ENCODE measurements at regions of chr22 and their contacts with region 1.

Region 1: DNA sequence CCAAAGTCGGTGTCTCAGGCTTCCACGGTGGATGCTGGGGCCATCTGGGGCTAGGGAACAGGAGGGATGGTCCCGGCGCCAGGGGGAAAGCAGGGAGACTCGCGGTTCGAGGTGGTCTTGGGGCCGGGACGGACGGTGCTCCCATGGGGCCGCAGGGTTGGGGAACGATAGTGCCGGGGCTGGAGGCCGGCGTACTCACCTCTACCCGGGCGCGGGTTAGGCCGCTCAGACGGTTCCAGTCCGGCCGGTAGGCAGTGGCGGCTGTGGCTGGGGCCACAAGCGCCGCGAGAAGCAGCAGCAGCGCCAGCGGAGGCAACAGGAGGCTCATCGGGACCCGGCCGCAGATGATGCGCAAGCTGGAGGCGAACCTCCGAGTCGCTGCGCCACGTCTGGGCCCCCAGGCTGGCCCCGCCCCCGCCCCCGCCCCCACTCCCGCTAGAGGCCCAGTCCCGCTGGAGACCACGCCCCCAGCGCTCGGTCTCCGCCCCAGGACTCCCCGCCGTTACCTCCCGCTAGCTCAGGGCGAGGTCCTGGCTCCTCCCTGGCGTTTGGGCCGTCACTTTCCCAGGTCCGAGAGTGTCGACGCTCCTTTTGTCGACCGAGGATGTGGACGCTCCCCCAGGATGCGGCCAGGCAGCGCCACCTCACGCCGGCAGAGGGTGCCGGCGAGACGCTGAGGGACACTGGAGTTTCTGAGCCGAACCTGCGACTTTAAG is at the start of gene SELENOM:
- DNase-seq: peak; percentile 99
- H3K4me3 Mint-ChIP-seq: peak within 1 kb of the TSS; percentile 82
- H3K27ac Mint-ChIP-seq: peak within 1 kb of the TSS; percentile 96
- H3K4me1 Mint-ChIP-seq: peaks cover 23% of the 10 kb centered on the region
- H3K27me3 Mint-ChIP-seq: no peaks in the 10 kb centered on the region
- CTCF ChIP-seq: peak; percentile 92
- total RNA-seq, gene SELENOM: 44.9 and 88.7 TPM in 2 replicates

Region 2: DNA sequence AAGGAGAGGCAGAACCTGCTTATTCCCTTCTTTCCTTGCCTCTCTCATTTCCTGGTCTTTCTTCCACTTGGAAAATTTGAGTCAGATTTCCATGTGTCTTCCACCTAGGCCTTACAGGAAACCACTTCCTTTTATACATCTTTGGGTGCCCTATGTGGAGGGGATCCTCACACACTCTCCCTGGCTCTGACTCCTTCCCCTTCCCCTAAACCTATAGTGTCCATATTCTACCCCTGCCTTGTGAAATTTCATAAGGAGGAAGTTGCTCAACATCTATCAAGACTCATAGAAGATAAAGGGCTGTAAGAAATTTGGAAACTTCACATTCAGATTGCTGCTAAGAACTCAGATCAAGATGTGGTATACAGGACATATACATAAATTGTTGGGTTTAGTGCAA is 117.9 kb before region 1 on chr22:
- CTCF ChIA-PET with region 1: no interaction called
- POLR2A ChIA-PET with region 1: no interaction called
- intact Hi-C with region 1: no loop called
- DNase-seq: no peak
- H3K4me3 Mint-ChIP-seq: no peak overlapping the region
- H3K27ac Mint-ChIP-seq: no peak overlapping the region
- H3K4me1 Mint-ChIP-seq: no peaks in the 10 kb centered on the region
- H3K27me3 Mint-ChIP-seq: no peaks in the 10 kb centered on the region
- CTCF ChIP-seq: no peak

Region 3: DNA sequence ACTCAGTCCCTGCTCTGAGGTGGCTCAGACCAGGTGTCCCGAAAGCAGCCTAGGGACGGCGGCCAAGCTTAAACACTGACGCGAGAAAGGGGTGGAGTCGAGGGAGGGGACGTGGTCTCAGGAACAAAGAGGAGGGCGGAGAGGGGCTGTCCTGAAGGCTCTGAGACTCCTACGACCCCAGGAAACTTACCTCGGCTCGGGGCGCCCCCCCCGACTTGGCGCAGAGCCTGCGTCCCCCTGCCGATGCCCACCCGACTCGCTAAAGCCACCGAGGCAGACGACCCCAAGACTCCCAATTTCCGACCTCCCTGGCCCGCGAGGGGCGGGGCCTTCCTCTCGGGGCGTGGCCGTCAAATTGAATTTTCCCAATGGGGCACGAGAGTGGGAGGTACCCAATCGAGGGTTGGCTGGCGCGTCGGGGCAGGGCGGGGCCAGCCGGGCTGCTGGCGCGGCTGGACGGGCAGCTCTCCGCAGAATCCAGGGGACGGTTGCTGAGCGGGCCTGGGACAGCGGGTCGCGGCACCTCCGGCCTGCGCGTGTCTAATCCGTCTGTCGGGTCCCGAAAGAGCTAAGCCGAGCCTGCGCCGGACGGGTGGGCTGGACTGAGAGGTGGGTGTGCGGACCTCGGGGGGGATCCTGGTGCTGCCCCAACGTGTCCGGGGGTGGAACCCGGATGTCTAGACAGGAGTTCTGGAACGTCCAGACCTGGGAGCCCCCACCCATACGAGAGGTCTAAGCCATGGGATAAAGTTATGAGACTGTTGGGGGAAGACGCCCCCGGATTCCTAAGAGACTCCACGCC is 26.3 kb before region 1 on chr22 and contains the start of gene SMTN:
- CTCF ChIA-PET with region 1: interaction called, 12 read pairs
- POLR2A ChIA-PET with region 1: interaction called, 10 read pairs
- intact Hi-C with region 1: no loop called
- DNase-seq: peak; percentile 93
- H3K4me3 Mint-ChIP-seq: peak within 1 kb of the TSS; percentile 86
- H3K27ac Mint-ChIP-seq: peak within 1 kb of the TSS; percentile 93
- H3K4me1 Mint-ChIP-seq: peaks cover 33% of the 10 kb centered on the region
- H3K27me3 Mint-ChIP-seq: no peaks in the 10 kb centered on the region
- CTCF ChIP-seq: no peak
- total RNA-seq, gene SMTN: 69.5 and 80.2 TPM in 2 replicates

Region 4: DNA sequence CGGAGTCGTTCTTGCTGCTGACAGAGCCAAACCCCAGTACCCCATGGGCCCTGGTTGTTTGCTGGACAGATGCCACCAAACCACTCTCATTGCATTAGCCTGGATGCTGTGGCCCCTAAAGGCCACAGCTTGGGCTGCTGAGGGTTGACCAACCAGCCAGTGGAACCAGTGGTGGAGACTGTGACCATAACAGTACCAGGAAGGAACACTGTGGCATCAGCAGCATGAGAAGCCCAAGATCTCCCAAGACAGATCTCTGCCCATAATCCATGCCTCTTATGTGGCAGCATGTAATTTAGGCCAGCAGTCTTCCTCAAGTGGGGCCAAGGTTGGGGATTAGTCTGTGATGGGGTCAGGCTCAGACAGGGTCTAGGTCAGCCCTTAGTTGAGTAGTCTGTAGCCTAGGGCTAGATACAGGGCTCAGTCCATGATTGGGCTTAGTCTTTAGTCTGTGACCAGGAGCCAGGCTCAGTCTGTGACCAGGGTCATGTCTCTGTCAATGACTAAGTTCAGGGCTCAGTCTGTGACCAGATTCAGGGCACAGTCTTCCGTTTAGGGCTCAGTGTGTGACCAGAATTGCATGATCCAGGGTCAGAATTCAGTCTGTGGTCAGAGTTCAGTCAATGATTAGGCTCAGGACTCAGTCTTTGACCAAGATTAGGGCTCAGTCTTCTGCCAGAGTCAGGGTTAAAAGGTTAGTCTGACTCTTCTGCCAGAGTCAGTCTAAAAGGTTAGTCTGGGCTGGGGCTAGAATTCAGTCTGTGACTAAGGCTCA is 10.9 kb after region 1 on chr22:
- CTCF ChIA-PET with region 1: interaction called, 19 read pairs
- POLR2A ChIA-PET with region 1: interaction called, 7 read pairs
- intact Hi-C with region 1: no loop called
- DNase-seq: no peak
- H3K4me3 Mint-ChIP-seq: no peak overlapping the region
- H3K27ac Mint-ChIP-seq: no peak overlapping the region
- H3K4me1 Mint-ChIP-seq: peaks cover 5% of the 10 kb centered on the region
- H3K27me3 Mint-ChIP-seq: no peaks in the 10 kb centered on the region
- CTCF ChIP-seq: no peak

Region 5: GRCh38 chr22:31160328-31160978 is 53.1 kb after region 1 on chr22:
- CTCF ChIA-PET with region 1: interaction called, 40 read pairs
- POLR2A ChIA-PET with region 1: interaction called, 21 read pairs
- intact Hi-C with region 1: no loop called
- DNase-seq: no peak
- H3K4me3 Mint-ChIP-seq: peak overlapping the region; percentile 89
- H3K27ac Mint-ChIP-seq: peak overlapping the region; percentile 97
- H3K4me1 Mint-ChIP-seq: peaks cover 14% of the 10 kb centered on the region
- H3K27me3 Mint-ChIP-seq: no peaks in the 10 kb centered on the region
- CTCF ChIP-seq: no peak

Region 6: DNA sequence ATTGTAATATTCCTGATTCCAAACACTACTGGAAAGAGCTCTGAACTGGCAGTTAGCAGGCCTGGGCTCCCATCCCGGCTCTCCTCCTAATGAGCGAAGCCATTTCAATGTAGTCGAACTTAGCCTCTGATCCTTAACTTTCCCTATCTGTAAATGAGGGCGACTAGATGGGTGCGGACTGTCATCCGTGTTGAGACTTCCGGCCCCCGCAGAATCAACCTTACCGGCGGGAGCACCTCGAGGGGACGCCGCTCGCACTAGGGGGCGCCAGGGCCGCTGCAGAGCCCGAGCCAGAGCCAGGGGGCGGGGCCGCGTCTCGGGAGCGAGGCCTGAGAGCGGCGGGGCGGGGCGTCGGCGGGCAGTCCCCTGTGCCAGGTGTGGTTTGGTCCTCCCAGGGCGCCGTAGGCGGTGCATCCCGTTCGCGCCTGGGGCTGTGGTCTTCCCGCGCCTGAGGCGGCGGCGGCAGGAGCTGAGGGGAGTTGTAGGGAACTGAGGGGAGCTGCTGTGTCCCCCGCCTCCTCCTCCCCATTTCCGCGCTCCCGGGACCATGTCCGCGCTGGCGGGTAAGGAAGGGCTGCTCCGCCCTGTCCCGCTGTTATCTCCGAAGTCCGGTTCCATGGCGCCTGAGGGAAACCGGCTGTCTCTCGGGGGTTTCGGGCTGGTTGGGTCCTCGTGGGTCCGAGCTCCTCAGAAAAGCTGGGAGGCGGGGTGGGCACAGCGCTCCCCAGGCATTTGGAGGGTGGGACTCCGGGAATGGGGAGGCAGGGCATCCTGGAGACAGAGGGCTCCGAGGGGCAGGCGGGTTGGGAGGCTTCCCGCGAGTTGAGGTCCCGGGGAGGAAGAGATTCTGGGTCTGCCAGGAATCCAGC is 104.8 kb after region 1 on chr22 and contains the start of gene LIMK2:
- CTCF ChIA-PET with region 1: interaction called, 16 read pairs
- POLR2A ChIA-PET with region 1: interaction called, 3 read pairs
- intact Hi-C with region 1: no loop called
- DNase-seq: peak; percentile 89
- H3K4me3 Mint-ChIP-seq: peak within 1 kb of the TSS; percentile 87
- H3K27ac Mint-ChIP-seq: peak within 1 kb of the TSS; percentile 82
- H3K4me1 Mint-ChIP-seq: peaks cover 20% of the 10 kb centered on the region
- H3K27me3 Mint-ChIP-seq: no peaks in the 10 kb centered on the region
- CTCF ChIP-seq: peak; percentile 85
- total RNA-seq, gene LIMK2: 74.4 and 126 TPM in 2 replicates

Region 7: GRCh38 chr22:31272522-31273446 is 165.4 kb after region 1 on chr22:
- CTCF ChIA-PET with region 1: interaction called, 3 read pairs
- POLR2A ChIA-PET with region 1: no interaction called
- intact Hi-C with region 1: loop called (anchors 1 kb)
- DNase-seq: peak; percentile 76
- H3K4me3 Mint-ChIP-seq: no peak overlapping the region
- H3K27ac Mint-ChIP-seq: no peak overlapping the region
- H3K4me1 Mint-ChIP-seq: peaks cover 8% of the 10 kb centered on the region
- H3K27me3 Mint-ChIP-seq: no peaks in the 10 kb centered on the region
- CTCF ChIP-seq: peak; percentile 66